ENCODE measurements at regions of chr22 and their contacts with region 1.

Region 1: GRCh38 chr22:30116362-30117117 is 36.3 kb downstream of the HORMAD2 start:
- DNase-seq: no peak
- ATAC-seq: no peak
- H3K4me3 ChIP-seq: no peak overlapping the region
- H3K27ac ChIP-seq: no peak overlapping the region
- H3K4me1 ChIP-seq: no peaks in the 10 kb centered on the region
- H3K27me3 ChIP-seq: no peaks in the 10 kb centered on the region
- CTCF ChIP-seq: no peak

Region 2: DNA sequence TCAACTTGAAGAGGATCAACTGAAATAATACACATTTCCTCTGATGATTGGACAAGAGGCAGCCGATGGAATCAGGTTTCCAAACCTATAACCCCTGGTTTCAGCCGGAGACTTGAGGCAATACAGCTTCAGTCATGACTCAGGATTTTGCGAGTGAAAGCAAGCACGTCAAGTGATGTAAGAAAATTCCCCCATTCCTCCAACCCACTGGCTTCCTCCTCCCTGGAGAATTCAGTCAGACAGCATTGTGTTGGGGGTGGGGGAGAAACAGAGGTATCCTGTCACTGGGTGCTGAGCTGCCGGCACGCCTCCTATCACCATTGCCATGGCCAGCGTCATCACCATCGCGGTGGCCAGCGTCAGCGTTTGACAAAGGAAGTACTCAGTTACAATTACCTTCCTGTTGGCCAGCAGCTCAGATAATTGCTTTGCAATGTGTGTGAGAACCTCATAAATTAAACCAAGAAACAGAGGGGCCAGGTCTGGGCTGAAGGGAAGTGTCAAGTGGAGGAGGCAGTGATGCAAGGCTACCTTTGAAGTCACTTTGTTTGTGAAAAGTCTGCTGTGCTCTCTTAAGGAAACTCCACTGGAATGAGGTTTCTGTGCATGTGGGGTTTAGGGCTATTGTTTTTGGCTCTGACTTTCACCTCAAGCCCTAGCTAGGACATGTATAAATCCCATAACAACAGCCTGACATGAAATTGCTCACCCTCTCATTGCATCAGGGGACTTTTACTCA is 79.8 kb after region 1 on chr22:
- intact Hi-C with region 1: loop called in 1 of 3 experiments (anchors 10 kb)
- DNase-seq: peak in 4 of 6 donors; percentile 57 to 65 (median 60)
- ATAC-seq: peak; percentile 63 to 88 (median 87)
- H3K4me3 ChIP-seq: no peak overlapping the region
- H3K27ac ChIP-seq: peak overlapping the region in 3 of 4 donors; percentile 18 to 80 (median 75)
- H3K4me1 ChIP-seq: peaks cover 0 to 8% (median 0%) of the 10 kb centered on the region in 3 donors
- H3K27me3 ChIP-seq: no peaks in the 10 kb centered on the region
- CTCF ChIP-seq: no peak

Measured in pancreas (tissue), 10 donors.